Calu3 (cell line): ENCODE measurements at regions of chr17 and their contacts with region 1.

Region 1: GRCh38 chr17:58517734-58518609 is 3.5 kb upstream of the MTMR4 start:
- DNase-seq: peak; percentile 97
- H3K4me3 Mint-ChIP-seq: peak overlapping the region; percentile 85
- H3K27ac Mint-ChIP-seq: peak overlapping the region; percentile 88
- H3K4me1 Mint-ChIP-seq: peaks cover 27% of the 10 kb centered on the region
- H3K27me3 Mint-ChIP-seq: no peaks in the 10 kb centered on the region
- CTCF ChIP-seq: no peak

Region 2: GRCh38 chr17:58463821-58464220 is 54.2 kb before region 1 on chr17:
- CTCF ChIA-PET with region 1: no interaction called
- intact Hi-C with region 1: no loop called
- DNase-seq: no peak
- H3K4me3 Mint-ChIP-seq: no peak overlapping the region
- H3K27ac Mint-ChIP-seq: no peak overlapping the region
- H3K4me1 Mint-ChIP-seq: no peaks in the 10 kb centered on the region
- H3K27me3 Mint-ChIP-seq: peaks cover 16% of the 10 kb centered on the region
- CTCF ChIP-seq: no peak

Region 3: DNA sequence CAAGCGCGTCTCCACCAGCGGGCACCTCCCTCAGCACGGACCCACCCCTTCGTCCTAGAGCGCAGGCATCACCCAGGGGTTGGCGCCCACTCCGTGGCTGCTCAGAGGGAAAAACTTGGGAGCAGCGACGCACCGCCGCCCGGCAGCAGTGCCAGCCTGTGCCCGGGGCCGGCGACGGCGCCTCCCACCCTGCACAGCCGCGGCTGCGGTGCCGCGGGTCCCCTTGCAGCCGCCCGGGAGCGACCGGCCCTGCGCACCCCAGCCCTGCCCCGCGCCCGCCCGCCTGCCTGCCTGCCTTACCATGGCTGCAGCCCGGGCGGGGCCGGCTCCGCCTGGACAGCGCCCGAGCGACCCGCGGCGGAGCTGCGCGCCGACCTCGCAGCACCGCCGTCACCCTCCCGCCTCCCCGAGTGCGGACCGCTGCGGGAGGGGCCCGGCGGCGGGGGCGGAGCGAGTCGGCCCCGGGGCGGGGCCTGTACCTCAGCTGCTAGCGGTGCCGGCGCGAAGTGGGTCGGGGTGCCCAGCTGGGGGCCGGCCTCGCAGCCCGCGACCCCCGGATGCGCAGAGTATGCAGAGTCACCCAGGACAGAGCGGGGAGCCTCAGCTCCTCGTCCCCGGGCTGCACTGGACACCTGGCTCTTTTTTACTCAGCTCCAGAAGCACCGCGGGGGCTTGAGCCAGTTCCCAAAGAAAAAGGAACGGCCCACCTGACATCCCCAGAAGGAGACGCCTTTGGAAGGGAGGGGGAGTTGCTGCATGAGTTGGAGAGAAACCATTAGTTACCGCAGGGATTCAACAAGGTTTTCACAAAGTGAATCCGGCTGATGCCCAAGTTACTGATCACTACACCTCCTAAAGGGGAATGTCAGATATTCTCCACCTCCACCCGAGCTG is 13.9 kb after region 1 on chr17:
- CTCF ChIA-PET with region 1: no interaction called
- intact Hi-C with region 1: no loop called
- DNase-seq: peak; percentile 43
- H3K4me3 Mint-ChIP-seq: peak overlapping the region; percentile 24
- H3K27ac Mint-ChIP-seq: no peak overlapping the region
- H3K4me1 Mint-ChIP-seq: peaks cover 23% of the 10 kb centered on the region
- H3K27me3 Mint-ChIP-seq: peaks cover 50% of the 10 kb centered on the region
- CTCF ChIP-seq: no peak

Region 4: DNA sequence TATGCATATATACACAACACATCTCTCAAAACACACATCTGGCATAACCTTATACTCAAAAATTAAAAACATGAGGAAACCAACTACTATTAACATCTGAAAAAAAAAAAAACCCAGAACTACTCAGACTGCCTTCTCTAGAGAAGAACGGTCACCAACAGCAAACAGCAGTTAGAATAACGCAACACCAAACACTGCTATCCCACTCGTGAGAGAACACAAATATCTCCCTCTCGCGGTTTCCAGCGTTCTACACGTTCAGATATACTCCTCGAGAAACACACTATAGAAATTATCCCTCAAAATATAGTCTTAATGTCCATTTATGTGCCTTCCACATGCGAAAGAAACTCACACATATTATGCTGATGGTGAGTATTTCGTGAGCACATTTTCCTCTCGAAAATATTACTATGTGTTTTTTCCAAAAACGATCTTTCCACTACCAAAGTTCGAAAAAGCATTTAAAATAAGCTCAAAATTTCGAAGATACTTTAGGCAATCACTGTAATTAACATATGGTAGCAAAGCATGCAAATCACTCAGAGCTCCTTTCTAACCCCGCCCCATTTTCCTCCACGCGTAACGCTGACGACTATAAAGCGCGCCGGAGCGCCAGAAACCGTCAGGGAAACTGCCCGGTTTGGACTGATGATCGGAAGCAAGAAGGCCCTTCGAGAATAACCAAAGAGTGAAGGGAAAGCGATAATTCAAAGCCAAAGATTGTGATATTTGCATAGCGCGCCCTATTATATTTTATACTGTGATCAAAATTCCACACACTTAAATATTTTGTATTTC is 113.8 kb after region 1 on chr17:
- CTCF ChIA-PET with region 1: interaction called, 3 read pairs
- intact Hi-C with region 1: loop called (anchors 5 kb)
- DNase-seq: peak; percentile 84
- H3K4me3 Mint-ChIP-seq: no peak overlapping the region
- H3K27ac Mint-ChIP-seq: no peak overlapping the region
- H3K4me1 Mint-ChIP-seq: no peaks in the 10 kb centered on the region
- H3K27me3 Mint-ChIP-seq: no peaks in the 10 kb centered on the region
- CTCF ChIP-seq: no peak

Region 5: DNA sequence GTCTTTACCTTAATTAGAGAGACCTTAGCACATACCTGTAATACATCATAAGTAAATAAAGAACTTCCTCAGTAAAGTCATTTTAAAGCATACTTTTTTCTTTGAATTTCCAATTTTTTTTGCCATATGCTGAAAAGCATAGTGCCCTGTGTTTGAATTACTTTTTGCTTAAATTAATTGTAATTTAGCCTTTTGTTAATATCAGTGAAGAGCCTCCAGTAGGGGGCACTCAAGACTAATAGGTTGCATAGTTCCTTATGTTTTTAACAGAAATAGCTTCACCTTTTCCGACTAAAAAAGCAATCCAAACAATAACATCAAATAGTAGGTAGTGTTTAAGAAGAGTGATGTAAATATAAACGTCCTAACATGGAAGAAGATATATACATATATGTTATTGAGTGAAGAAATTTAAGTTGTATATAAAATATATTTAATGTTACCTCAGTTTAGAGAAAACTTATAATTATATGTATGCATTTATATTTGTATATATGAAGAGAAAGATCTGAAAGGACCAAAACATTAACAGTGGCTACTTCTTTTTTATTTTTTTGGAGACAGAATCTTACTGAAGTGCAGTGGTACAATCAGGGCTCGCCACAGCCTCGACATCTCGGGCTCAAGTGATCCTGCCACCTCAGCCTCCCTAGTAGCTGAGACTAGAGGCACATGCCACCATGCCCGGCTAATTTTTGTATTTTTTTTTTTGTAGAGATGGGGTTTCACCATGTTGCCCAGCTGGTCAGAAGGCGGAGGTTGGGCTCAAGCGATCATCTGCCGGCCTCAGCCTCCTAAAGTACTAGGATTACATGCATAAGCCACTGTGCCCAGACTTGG is 193.2 kb after region 1 on chr17:
- CTCF ChIA-PET with region 1: no interaction called
- intact Hi-C with region 1: loop called (anchors 5 kb)
- DNase-seq: peak; percentile 34
- H3K4me3 Mint-ChIP-seq: no peak overlapping the region
- H3K27ac Mint-ChIP-seq: no peak overlapping the region
- H3K4me1 Mint-ChIP-seq: no peaks in the 10 kb centered on the region
- H3K27me3 Mint-ChIP-seq: no peaks in the 10 kb centered on the region
- CTCF ChIP-seq: peak; percentile 52